ENCODE measurements at regions of chr19 and their contacts with region 1.

Region 1: GRCh38 chr19:47296036-47296435 is 13.6 kb upstream of the C5AR1 start:
- DNase-seq: peak; percentile 78

Region 2: DNA sequence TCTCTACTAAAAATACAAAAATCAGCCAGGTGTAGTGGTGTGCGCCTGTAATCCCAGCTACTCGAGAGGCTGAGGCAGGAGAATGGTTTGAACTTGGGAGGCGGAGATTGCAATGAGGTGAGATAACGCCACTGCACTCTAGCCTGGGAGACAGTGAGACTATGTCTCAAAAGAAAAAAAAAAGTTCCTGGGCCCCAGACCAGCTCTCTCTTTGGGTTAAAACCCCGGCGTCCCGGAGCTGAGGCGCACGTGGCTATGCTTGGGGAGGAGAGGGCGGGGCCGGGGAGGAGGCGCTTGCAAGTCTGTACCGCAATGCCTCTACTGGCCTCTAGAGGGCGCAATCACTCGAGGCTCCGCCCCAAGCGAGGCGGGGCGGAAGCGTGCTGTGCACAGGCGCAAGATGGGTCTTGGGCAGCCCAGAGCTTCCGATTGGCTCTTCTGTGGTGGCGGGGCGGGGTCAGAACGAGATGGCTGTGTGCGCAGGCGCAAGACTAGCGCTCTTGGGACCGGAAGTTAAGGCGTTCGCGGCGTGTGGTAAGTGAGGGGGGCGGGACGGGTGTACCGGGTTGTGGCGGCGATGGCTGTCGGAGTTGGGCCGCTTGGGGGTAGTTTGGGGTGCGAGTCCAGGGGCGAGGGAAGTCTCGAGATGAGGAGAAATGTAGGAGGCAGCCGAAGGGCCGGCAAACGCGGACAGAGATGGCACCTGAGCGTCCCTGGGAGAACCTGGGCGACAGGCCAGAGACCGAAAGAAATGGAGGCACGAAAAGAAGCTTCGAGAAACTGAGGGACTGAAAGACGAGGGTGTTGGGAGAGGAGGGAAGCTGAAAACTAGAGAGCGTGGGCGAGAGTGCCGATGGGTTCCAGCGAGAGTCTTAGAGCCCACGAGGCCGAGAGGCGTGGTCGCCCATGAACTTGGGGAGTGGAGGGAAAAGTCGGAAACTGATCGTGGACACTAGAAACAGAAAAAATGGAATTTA is 53.1 kb after region 1 on chr19 and contains the start of gene DHX34:
- in situ Hi-C with region 1: no loop called
- DNase-seq: peak; percentile 99

Region 3: GRCh38 chr19:47406711-47407416 is 110.8 kb after region 1 on chr19:
- in situ Hi-C with region 1: loop called (anchors 10 kb)
- DNase-seq: no peak

Measured in KBM-7 (cell line).